Common myeloid progenitor, CD34-positive (primary cell): ENCODE measurements at regions of chr10 and their contacts with region 1.

Region 1: DNA sequence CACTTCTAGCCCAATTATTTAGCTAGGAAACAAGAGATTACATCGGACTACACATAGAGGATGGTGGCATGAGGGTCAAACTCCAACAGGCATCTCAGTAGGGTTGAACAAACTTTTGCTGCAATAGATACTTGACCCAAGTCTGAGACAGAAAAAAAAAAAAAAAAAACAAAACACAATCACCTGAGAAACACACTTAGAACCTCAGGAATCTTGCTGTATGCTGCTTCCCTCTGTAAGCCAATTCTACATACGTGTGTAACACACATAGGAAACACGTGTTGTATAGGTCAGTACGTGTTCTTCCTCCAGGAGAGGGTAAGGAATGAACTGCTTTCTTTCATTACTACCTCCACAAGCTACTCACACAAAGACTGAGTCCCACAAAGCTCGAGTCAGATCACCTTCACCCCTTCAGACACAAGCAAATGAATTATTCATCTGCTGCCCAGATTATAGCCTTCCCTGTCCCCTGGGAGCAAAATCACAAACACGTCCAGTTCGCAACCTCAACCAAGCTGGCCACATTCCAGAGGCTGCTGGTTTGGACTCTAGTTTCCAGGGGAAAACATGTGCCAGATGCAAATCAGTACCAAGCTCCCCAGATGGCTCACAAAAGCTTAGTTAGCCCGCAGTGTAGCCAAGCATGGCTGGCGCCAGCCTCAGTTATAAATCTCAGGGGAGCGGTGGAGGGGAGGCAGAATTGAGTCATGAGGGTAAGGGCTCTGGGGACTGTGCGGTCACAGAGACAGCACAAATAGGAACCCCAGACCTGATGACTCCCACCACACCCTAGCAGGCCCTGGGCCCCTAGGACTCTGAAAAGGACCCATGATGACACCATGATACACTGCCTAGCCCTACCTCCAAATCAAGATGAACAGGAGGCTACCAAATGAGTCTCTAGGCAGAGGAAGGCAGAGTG is 15.1 kb downstream of the PSAP start:
- DNase-seq: peak in 2 of 3 donors; percentile 46 to 70
- H3K4me3 ChIP-seq: no peak overlapping the region
- H3K27ac ChIP-seq: no peak overlapping the region
- H3K4me1 ChIP-seq: peaks cover 0 to 10% (median 4%) of the 10 kb centered on the region in 4 experiments
- H3K27me3 ChIP-seq: no peaks in the 10 kb centered on the region

Region 2: GRCh38 chr10:71850637-71851464 is 14.9 kb after region 1 on chr10 and contains the start of gene PSAP:
- CTCF ChIA-PET with region 1: interaction called, 14 read pairs
- POLR2A ChIA-PET with region 1: interaction called, 4 read pairs
- DNase-seq: peak; percentile 96 to 97 (median 96)
- H3K4me3 ChIP-seq: peak within 1 kb of the TSS; percentile 78 to 97 (median 90)
- H3K27ac ChIP-seq: peak within 1 kb of the TSS; percentile 40 to 87
- H3K4me1 ChIP-seq: peaks cover 9 to 39% (median 28%) of the 10 kb centered on the region in 4 experiments
- H3K27me3 ChIP-seq: no peaks in the 10 kb centered on the region

Region 3: DNA sequence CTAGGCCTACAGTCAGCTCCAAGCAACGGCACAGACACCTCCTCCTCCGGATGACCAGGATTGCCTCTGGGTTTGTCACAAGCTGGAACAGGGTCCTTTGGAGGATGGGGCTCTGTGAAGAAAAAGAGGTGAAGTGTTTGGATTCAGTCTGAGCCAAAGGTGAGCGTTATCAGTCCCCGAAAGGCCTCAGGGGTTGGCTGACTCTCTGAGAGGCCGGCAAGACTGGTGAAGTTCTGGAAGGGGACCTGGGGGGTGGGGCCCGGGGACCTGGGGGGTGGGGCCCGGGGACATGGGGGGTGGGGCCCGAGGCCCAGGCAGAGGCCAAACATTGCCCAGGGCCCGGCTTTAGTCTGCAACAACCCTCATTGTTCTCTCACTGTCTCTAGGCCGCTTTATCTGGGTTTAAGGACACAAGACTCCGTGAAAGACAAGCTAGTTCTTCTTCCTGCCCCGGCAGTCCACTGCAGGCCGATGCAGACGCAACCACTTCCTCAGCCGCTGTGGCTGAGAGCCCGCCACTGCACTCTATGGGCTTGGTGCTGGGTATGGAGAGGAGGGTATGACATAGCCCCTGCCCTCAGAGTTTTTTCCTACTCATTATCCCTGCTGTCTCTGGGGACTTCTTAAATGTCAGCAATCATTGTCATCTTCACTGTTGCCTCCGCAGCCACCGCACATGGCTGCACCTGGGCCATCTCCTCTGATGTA is 42.5 kb after region 1 on chr10:
- CTCF ChIA-PET with region 1: interaction called, 22 read pairs
- POLR2A ChIA-PET with region 1: no interaction called
- DNase-seq: peak; percentile 44 to 82 (median 78)
- H3K4me3 ChIP-seq: peak overlapping the region in 3 of 7 experiments; percentile 4 to 33 (median 7)
- H3K27ac ChIP-seq: peak overlapping the region in 1 of 2 experiments; percentile 66
- H3K4me1 ChIP-seq: peaks cover 8 to 23% (median 12%) of the 10 kb centered on the region in 4 experiments
- H3K27me3 ChIP-seq: no peaks in the 10 kb centered on the region

Region 4: GRCh38 chr10:71888623-71889387 is 52.9 kb after region 1 on chr10:
- CTCF ChIA-PET with region 1: interaction called, 129 read pairs
- POLR2A ChIA-PET with region 1: no interaction called
- DNase-seq: peak; percentile 76 to 89 (median 88)
- H3K4me3 ChIP-seq: peak overlapping the region; percentile 18 to 81 (median 68)
- H3K27ac ChIP-seq: peak overlapping the region in 1 of 2 experiments; percentile 50
- H3K4me1 ChIP-seq: peaks cover 9 to 35% (median 25%) of the 10 kb centered on the region in 4 experiments
- H3K27me3 ChIP-seq: no peaks in the 10 kb centered on the region

Region 5: DNA sequence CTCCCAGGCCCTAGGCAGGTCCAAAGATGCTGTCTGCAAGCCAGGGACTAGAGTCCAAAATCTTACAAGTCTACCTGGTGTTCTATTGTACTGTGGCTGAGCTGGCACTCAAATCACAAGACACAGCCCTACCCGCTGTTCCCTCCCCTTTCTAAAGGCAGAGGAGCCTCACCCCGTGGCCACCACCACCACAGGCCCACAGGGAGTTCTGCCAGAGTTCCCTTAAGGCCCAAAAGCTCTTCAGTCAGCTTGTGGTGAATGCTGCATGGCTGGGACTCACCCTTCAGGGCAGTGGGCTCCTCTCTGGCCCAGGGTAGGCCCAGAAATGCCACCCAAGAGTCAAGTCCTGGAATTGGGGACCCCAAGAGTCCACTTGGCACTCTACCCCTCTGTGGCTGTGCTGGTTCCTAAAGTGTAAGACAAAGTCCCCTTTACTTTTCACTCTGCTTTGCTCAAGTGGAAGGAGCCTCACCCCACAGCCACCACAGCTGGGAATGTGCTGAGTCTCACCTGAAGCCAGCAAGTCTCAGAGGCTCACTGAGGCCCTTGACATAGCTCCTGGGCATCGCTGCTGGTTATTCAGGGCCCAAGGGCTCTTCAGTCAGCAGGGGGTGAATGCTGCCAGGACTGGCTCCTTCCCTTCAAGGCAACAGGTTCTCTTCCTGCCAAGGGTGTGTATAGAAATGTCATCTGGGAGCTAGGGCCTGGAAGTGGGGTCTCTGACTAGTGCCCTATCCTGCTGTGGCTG is 63.9 kb after region 1 on chr10:
- CTCF ChIA-PET with region 1: interaction called, 129 read pairs
- POLR2A ChIA-PET with region 1: interaction called, 3 read pairs
- DNase-seq: no peak
- H3K4me3 ChIP-seq: no peak overlapping the region
- H3K27ac ChIP-seq: no peak overlapping the region
- H3K4me1 ChIP-seq: peaks cover 0 to under 1% (median 0%) of the 10 kb centered on the region in 4 experiments
- H3K27me3 ChIP-seq: no peaks in the 10 kb centered on the region